Posterior vena cava (tissue), 2 donors: ENCODE measurements at regions of chr1 and their contacts with region 1.

Region 1: GRCh38 chr1:24830680-24831272 is 85.5 kb downstream of the CLIC4 start:
- DNase-seq: no peak

Region 2: DNA sequence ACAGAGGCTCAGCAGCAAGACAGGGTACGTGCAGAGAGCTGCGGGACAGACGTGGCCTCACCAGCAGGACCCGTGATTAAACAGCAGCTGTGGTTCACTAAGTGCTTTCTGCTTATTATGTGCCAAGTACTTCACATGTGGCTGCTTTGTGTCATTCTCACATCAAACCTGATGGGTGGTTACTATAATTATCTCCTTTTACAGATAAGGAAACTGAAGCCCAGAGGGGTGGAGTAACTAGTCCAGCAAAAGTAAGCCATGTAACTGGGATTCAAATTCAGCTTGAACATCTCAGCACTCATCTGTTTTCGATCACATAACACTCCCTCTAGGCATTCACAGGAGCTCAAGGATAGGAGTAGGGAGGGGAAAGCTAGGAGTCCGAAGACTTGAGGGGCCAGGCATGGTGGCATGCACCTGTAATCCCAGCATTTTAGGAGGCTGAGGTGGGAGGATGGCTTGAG is 136.4 kb before region 1 on chr1:
- intact Hi-C with region 1: loop called (anchors 2 to 5 kb)
- DNase-seq: no peak